ENCODE measurements at regions of chr5 and their contacts with region 1.

Region 1: GRCh38 chr5:179821581-179822432 is 1.1 kb downstream of the SQSTM1 start:
- DNase-seq: peak; percentile 97 to 98
- ATAC-seq: peak; percentile 50 to 51
- H3K4me3 ChIP-seq: peak overlapping the region; percentile 89 to 97 (median 94)
- H3K27ac ChIP-seq: peak overlapping the region; percentile 95 to 100 (median 99)
- H3K4me1 ChIP-seq: peaks cover 65 to 66% of the 10 kb centered on the region in 2 donors
- H3K27me3 ChIP-seq: no peaks in the 10 kb centered on the region
- CTCF ChIP-seq: no peak
- POLR2A ChIP-seq: peak; percentile 77 to 90

Region 2: GRCh38 chr5:179678223-179679013 is 143.4 kb before region 1 on chr5:
- in situ Hi-C with region 1: no loop called
- intact Hi-C with region 1: loop called (anchors 5 kb)
- DNase-seq: peak; percentile 89 to 94
- ATAC-seq: peak; percentile 96 to 97
- H3K4me3 ChIP-seq: peak overlapping the region; percentile 77 to 100 (median 84)
- H3K27ac ChIP-seq: peak overlapping the region; percentile 88 to 99 (median 92)
- H3K4me1 ChIP-seq: peaks cover 9 to 12% of the 10 kb centered on the region in 2 donors
- H3K27me3 ChIP-seq: no peaks in the 10 kb centered on the region
- CTCF ChIP-seq: peak in 2 of 5 experiments; percentile 21 to 25
- POLR2A ChIP-seq: peak; percentile 76 to 77

Region 3: GRCh38 chr5:179697993-179698934 is 123.5 kb before region 1 on chr5:
- in situ Hi-C with region 1: no loop called
- intact Hi-C with region 1: loop called (anchors 1 kb)
- DNase-seq: peak; percentile 99 to 100
- ATAC-seq: peak; percentile 90 to 96
- H3K4me3 ChIP-seq: peak overlapping the region; percentile 83 to 99 (median 88)
- H3K27ac ChIP-seq: peak overlapping the region; percentile 93 to 100 (median 98)
- H3K4me1 ChIP-seq: peaks cover 21 to 28% of the 10 kb centered on the region in 2 donors
- H3K27me3 ChIP-seq: no peaks in the 10 kb centered on the region
- CTCF ChIP-seq: no peak
- POLR2A ChIP-seq: peak; percentile 90 to 91

Region 4: GRCh38 chr5:179806250-179807222 is 15.3 kb before region 1 on chr5 and contains the start of gene MGAT4B:
- in situ Hi-C with region 1: no loop called
- intact Hi-C with region 1: loop called (anchors 1 kb)
- DNase-seq: peak; percentile 56 to 69
- ATAC-seq: peak; percentile 72 to 76
- H3K4me3 ChIP-seq: peak within 1 kb of the TSS; percentile 75 to 95 (median 87)
- H3K27ac ChIP-seq: peak within 1 kb of the TSS; percentile 89 to 98 (median 94)
- H3K4me1 ChIP-seq: peaks cover 19 to 36% of the 10 kb centered on the region in 2 donors
- H3K27me3 ChIP-seq: no peaks in the 10 kb centered on the region
- CTCF ChIP-seq: no peak
- POLR2A ChIP-seq: peak; percentile 73
- total RNA-seq, gene MGAT4B: 28.3 to 86.0 (median 61.4) TPM

Region 5: GRCh38 chr5:179839328-179840256 is 17.8 kb after region 1 on chr5:
- in situ Hi-C with region 1: no loop called
- intact Hi-C with region 1: loop called (anchors 2 kb)
- DNase-seq: peak in 1 of 2 donors; percentile 88
- ATAC-seq: peak; percentile 54 to 66
- H3K4me3 ChIP-seq: no peak overlapping the region
- H3K27ac ChIP-seq: peak overlapping the region; percentile 87 to 92 (median 88)
- H3K4me1 ChIP-seq: peaks cover 30 to 43% of the 10 kb centered on the region in 2 donors
- H3K27me3 ChIP-seq: no peaks in the 10 kb centered on the region
- CTCF ChIP-seq: no peak
- POLR2A ChIP-seq: peak; percentile 40 to 59

Region 6: DNA sequence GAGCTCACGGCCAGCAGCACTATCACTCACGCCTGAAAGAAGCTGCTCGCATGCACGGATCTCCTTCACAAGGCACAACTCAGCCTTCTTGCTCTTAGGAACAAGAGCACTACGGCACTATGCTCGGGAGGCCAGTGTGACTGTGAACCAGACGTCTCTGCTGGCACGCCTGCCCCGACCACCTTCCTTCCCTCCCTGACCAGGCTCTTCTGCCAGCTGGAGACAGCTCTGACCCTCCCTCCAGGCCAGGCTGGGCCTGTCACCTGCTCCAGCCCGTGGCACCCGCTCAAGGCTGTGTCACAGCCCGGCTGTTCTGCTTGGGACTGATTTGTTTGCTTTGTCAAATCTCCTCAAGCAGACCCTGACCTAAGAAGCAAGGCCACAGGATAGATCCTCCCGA is 78.9 kb after region 1 on chr5:
- in situ Hi-C with region 1: no loop called
- intact Hi-C with region 1: no loop called
- DNase-seq: peak; percentile 50 to 74
- ATAC-seq: peak; percentile 77 to 78
- H3K4me3 ChIP-seq: peak overlapping the region in 1 of 4 donors; percentile 21
- H3K27ac ChIP-seq: peak overlapping the region; percentile 50 to 81 (median 74)
- H3K4me1 ChIP-seq: peaks cover 15 to 25% of the 10 kb centered on the region in 2 donors
- H3K27me3 ChIP-seq: no peaks in the 10 kb centered on the region
- CTCF ChIP-seq: no peak
- POLR2A ChIP-seq: no peak

Measured in gastrocnemius medialis (tissue), 4 donors.